Mucosa of descending colon (tissue), 3 donors: ENCODE measurements at regions of chr12 and their contacts with region 1.

Region 1: GRCh38 chr12:51980051-51980808 is 26.5 kb upstream of the TAMALIN start:
- DNase-seq: peak; percentile 68 to 72 (median 69)
- ATAC-seq: peak; percentile 96
- H3K4me3 ChIP-seq: no peak overlapping the region
- H3K4me1 ChIP-seq: no peaks in the 10 kb centered on the region
- CTCF ChIP-seq: peak; percentile 96

Region 2: DNA sequence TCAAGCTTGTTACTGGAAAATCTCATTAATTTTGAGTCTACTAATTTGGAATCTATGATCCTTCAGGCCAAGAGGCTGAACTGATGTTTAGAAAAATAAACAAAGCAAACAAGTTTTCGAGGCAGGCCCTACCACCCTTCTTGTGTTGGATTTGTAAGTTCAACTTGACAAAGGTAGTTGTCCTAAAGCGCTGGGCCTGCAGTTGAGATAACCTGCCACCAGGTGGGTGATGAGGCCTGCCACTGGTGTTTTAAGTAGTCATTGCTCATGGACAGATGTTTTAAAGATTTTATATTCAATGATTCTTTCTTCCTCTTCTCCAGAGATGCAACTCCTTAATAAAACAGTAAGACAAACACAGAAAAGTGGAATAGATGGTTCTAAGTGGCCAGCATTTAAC is 53.5 kb before region 1 on chr12:
- intact Hi-C with region 1: loop called in 1 of 2 experiments (anchors 5 kb)
- DNase-seq: peak in 2 of 3 donors; percentile 81 to 86
- ATAC-seq: peak; percentile 40
- H3K4me3 ChIP-seq: no peak overlapping the region
- H3K4me1 ChIP-seq: peaks cover 15% of the 10 kb centered on the region
- CTCF ChIP-seq: peak; percentile 43